Naive thymus-derived CD4-positive, alpha-beta T cell (primary cell): ENCODE measurements at regions of chr11 and their contacts with region 1.

Region 1: GRCh38 chr11:35082321-35083182 is 56.4 kb upstream of the CD44 start:
- DNase-seq: peak; percentile 76 to 94 (median 92)
- ATAC-seq: peak; percentile 86
- H3K4me3 ChIP-seq: peak overlapping the region; percentile 55
- H3K4me3 Mint-ChIP-seq: peak overlapping the region; percentile 78 to 89 (median 86)
- H3K27ac ChIP-seq: peak overlapping the region; percentile 95
- H3K27ac Mint-ChIP-seq: peak overlapping the region; percentile 89 to 100 (median 99)
- H3K4me1 ChIP-seq: peaks cover 64 to 78% of the 10 kb centered on the region in 2 donors
- H3K4me1 Mint-ChIP-seq: peaks cover 61 to 100% (median 95%) of the 10 kb centered on the region in 7 donors
- H3K27me3 ChIP-seq: no peaks in the 10 kb centered on the region
- H3K27me3 Mint-ChIP-seq: no peaks in the 10 kb centered on the region

Region 2: DNA sequence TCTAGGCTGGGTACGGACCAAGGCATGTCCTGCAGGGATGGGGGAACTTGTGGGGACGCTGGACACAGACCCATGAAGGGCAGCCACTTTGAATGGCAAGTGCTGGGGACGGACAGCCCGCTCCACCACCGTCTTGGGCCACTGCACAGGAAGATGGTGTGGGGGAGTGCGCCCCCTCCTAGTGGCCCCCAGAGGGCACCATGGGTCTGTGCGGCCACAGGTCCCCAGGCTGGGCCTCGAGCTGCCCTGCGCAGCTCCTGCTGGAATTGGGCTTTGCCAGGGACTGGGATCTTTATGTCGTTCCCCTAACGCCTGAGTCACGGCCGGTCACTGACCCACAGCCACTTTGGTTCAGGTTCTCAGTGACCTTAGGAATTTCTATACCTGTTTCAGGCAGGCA is 932.8 kb before region 1 on chr11:
- CTCF ChIA-PET with region 1: no interaction called
- POLR2A ChIA-PET with region 1: no interaction called
- intact Hi-C with region 1: no loop called
- DNase-seq: no peak
- ATAC-seq: no peak
- H3K4me3 ChIP-seq: no peak overlapping the region
- H3K4me3 Mint-ChIP-seq: no peak overlapping the region
- H3K27ac ChIP-seq: no peak overlapping the region
- H3K27ac Mint-ChIP-seq: no peak overlapping the region
- H3K4me1 ChIP-seq: no peaks in the 10 kb centered on the region
- H3K4me1 Mint-ChIP-seq: peaks cover 0 to 9% (median 6%) of the 10 kb centered on the region in 7 donors
- H3K27me3 ChIP-seq: no peaks in the 10 kb centered on the region
- H3K27me3 Mint-ChIP-seq: no peaks in the 10 kb centered on the region

Region 3: GRCh38 chr11:34997952-34998528 is 84.5 kb before region 1 on chr11:
- CTCF ChIA-PET with region 1: no interaction called
- POLR2A ChIA-PET with region 1: no interaction called
- intact Hi-C with region 1: loop called (anchors 1 kb)
- DNase-seq: peak in 6 of 9 donors; percentile 27 to 54 (median 44)
- ATAC-seq: peak; percentile 72
- H3K4me3 ChIP-seq: no peak overlapping the region
- H3K4me3 Mint-ChIP-seq: peak overlapping the region in 9 of 10 donors; percentile 6 to 81 (median 34)
- H3K27ac ChIP-seq: peak overlapping the region; percentile 8
- H3K27ac Mint-ChIP-seq: peak overlapping the region; percentile 15 to 90 (median 69)
- H3K4me1 ChIP-seq: peaks cover 15 to 19% of the 10 kb centered on the region in 2 donors
- H3K4me1 Mint-ChIP-seq: peaks cover 19 to 38% (median 35%) of the 10 kb centered on the region in 7 donors
- H3K27me3 ChIP-seq: no peaks in the 10 kb centered on the region
- H3K27me3 Mint-ChIP-seq: no peaks in the 10 kb centered on the region

Region 4: GRCh38 chr11:35040221-35040942 is 42.2 kb before region 1 on chr11:
- CTCF ChIA-PET with region 1: interaction called, 3 read pairs
- POLR2A ChIA-PET with region 1: interaction called, 66 read pairs
- intact Hi-C with region 1: loop called (anchors 1 kb)
- DNase-seq: peak in 8 of 9 donors; percentile 53 to 89 (median 74)
- ATAC-seq: peak; percentile 88
- H3K4me3 ChIP-seq: peak overlapping the region; percentile 60
- H3K4me3 Mint-ChIP-seq: peak overlapping the region; percentile 74 to 94 (median 89)
- H3K27ac ChIP-seq: peak overlapping the region; percentile 86
- H3K27ac Mint-ChIP-seq: peak overlapping the region; percentile 90 to 99 (median 97)
- H3K4me1 ChIP-seq: peaks cover 29 to 45% of the 10 kb centered on the region in 2 donors
- H3K4me1 Mint-ChIP-seq: peaks cover 28 to 77% (median 68%) of the 10 kb centered on the region in 7 donors
- H3K27me3 ChIP-seq: no peaks in the 10 kb centered on the region
- H3K27me3 Mint-ChIP-seq: peaks cover 0 to 29% (median 0%) of the 10 kb centered on the region in 5 donors

Region 5: DNA sequence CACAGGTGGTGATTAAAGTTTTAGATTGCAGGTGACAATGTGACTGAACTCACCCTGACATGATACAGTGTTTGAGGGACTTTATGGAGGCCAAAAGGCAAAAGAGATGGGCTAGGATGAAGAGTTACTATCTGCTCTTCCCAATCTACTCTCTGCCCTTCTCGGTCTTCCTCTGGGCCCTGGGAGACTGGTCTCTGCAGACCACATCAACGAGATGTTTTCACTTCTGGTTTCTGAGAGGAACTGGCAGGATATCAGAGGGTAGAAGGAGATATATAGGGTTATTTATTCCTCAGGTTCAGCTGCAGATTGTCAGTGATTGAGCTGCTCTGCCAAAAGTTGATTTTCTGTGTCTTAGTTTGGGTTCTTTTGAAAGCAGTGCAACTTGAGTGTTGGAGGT is 24.0 kb after region 1 on chr11:
- CTCF ChIA-PET with region 1: no interaction called
- POLR2A ChIA-PET with region 1: interaction called, 7 read pairs
- intact Hi-C with region 1: loop called (anchors 1 to 2 kb)
- DNase-seq: peak in 5 of 9 donors; percentile 31 to 45 (median 38)
- ATAC-seq: peak; percentile 74
- H3K4me3 ChIP-seq: no peak overlapping the region
- H3K4me3 Mint-ChIP-seq: peak overlapping the region; percentile 16 to 78 (median 70)
- H3K27ac ChIP-seq: peak overlapping the region; percentile 66
- H3K27ac Mint-ChIP-seq: peak overlapping the region in 8 of 9 donors; percentile 83 to 97 (median 92)
- H3K4me1 ChIP-seq: peaks cover 16 to 45% of the 10 kb centered on the region in 2 donors
- H3K4me1 Mint-ChIP-seq: peaks cover 43 to 79% (median 68%) of the 10 kb centered on the region in 7 donors
- H3K27me3 ChIP-seq: no peaks in the 10 kb centered on the region
- H3K27me3 Mint-ChIP-seq: no peaks in the 10 kb centered on the region

Region 6: DNA sequence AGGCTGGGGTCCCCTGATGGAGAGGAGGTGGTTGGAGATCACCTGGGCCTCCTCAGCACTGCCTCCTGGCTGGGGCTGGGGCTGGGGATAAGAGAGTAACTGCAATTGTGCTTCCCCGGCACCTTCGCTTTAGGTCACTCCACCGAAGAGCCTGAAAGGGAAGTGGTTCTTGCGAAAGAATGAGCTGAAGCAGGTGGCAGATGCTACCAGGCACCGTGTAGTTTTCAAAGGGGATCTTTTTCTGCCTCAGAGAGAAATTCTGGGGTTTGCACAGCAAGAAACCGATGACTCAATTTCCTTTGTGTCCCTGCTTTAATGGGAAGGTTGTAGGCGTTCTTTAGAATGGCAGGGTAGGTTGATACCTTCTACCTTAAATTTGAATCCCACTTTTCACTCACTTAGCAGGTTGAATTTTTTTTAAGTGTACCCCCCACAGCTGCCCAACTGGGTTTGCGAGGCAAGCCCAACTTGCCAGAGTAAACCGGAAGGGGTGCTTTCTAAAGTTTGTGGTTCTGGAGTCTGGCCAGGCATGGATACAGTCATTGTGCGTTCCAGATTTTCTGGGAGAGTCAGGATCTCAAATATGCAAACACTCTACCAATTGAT is 61.7 kb after region 1 on chr11:
- CTCF ChIA-PET with region 1: interaction called, 3 read pairs
- POLR2A ChIA-PET with region 1: interaction called, 35 read pairs
- intact Hi-C with region 1: loop called (anchors 1 kb)
- DNase-seq: peak in 8 of 9 donors; percentile 59 to 85 (median 74)
- ATAC-seq: peak; percentile 59
- H3K4me3 ChIP-seq: peak overlapping the region; percentile 97
- H3K4me3 Mint-ChIP-seq: peak overlapping the region; percentile 83 to 99 (median 94)
- H3K27ac ChIP-seq: peak overlapping the region; percentile 88
- H3K27ac Mint-ChIP-seq: peak overlapping the region; percentile 79 to 100 (median 92)
- H3K4me1 ChIP-seq: peaks cover 68 to 74% of the 10 kb centered on the region in 2 donors
- H3K4me1 Mint-ChIP-seq: peaks cover 62 to 83% (median 77%) of the 10 kb centered on the region in 7 donors
- H3K27me3 ChIP-seq: no peaks in the 10 kb centered on the region
- H3K27me3 Mint-ChIP-seq: no peaks in the 10 kb centered on the region

Region 7: GRCh38 chr11:35237860-35238715 is 155.5 kb after region 1 on chr11:
- CTCF ChIA-PET with region 1: no interaction called
- POLR2A ChIA-PET with region 1: no interaction called
- intact Hi-C with region 1: loop called (anchors 2 to 5 kb)
- DNase-seq: peak in 7 of 9 donors; percentile 28 to 69 (median 47)
- ATAC-seq: peak; percentile 46
- H3K4me3 ChIP-seq: no peak overlapping the region
- H3K4me3 Mint-ChIP-seq: peak overlapping the region in 5 of 10 donors; percentile 20 to 74 (median 61)
- H3K27ac ChIP-seq: no peak overlapping the region
- H3K27ac Mint-ChIP-seq: peak overlapping the region; percentile 39 to 90 (median 73)
- H3K4me1 ChIP-seq: peaks cover 40 to 46% of the 10 kb centered on the region in 2 donors
- H3K4me1 Mint-ChIP-seq: peaks cover 51 to 94% (median 80%) of the 10 kb centered on the region in 7 donors
- H3K27me3 ChIP-seq: no peaks in the 10 kb centered on the region
- H3K27me3 Mint-ChIP-seq: peaks cover 0 to 9% (median 0%) of the 10 kb centered on the region in 5 donors